ENCODE measurements at regions of chr14 and their contacts with region 1.

Region 1: DNA sequence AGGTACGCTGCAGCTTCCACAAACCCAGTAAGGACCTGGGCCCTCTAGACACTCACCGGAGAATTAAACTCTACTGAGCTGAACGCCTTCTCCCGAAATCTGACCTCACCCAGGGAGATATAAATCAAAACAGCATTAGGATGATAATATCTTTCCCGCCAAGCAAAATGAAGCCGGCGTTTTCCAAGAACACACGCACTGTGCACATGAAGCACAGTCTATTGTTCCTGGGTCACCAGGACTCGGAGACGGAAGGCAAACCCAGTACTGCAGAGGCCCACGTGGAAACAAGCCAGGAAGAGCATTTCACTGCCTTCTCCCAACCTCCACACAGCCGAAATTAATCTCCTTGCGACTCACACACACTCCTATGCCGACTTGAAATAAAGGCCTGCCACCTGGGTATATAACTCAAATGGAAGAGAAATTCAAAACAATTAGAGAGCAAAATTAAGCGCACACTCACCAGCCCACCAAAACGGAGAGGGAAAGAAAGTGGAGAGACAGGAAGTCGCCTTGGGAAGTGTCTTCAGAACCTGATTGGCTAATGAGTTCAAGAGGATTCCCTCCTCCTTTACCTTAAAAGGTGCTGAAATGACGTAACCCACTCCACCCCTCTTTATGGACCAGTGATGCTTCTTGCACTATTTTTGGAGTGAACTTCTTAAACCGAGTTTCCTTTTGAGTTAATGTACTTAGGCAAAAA is at the start of gene CCNB1IP1:
- DNase-seq: peak; percentile 29 to 83
- ATAC-seq: peak; percentile 96 to 100 (median 99)
- H3K4me3 ChIP-seq: peak within 1 kb of the TSS; percentile 29 to 75 (median 68)
- H3K27ac ChIP-seq: peak within 1 kb of the TSS; percentile 49 to 89 (median 84)
- H3K4me1 ChIP-seq: peaks cover 0 to 28% (median 23%) of the 10 kb centered on the region in 9 donors
- H3K27me3 ChIP-seq: no peaks in the 10 kb centered on the region
- CTCF ChIP-seq: no peak
- total RNA-seq, gene CCNB1IP1: 35.7 to 69.9 (median 56.0) TPM

Region 2: DNA sequence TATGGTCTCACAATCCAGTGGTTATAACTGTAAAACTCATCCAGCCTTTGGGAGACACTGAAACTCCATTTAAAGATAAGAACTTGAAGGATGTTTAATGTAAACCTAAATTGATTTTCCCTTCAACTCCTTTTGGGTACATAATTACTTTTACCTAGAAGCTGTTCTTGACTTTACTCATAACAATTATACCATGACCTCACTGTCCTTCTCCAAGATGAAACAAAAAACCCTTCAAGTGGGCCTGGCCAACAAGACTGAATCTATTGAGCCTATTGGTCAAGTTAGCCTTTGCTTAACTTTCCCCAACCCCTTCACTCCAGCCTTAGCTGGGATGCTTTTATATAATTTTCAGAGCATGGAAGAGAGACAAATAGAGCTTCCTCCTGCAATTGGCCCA is 33.0 kb after region 1 on chr14:
- intact Hi-C with region 1: no loop called
- DNase-seq: no peak
- ATAC-seq: no peak
- H3K4me3 ChIP-seq: no peak overlapping the region
- H3K27ac ChIP-seq: no peak overlapping the region
- H3K4me1 ChIP-seq: no peaks in the 10 kb centered on the region
- H3K27me3 ChIP-seq: no peaks in the 10 kb centered on the region
- CTCF ChIP-seq: no peak

Region 3: GRCh38 chr14:20461274-20462001 is 128.5 kb after region 1 on chr14 and contains the start of gene PIP4P1:
- intact Hi-C with region 1: loop called in 1 of 10 experiments (anchors 5 kb)
- DNase-seq: peak; percentile 97 to 99
- ATAC-seq: peak; percentile 96 to 99 (median 98)
- H3K4me3 ChIP-seq: peak within 1 kb of the TSS; percentile 81 to 100 (median 94)
- H3K27ac ChIP-seq: peak within 1 kb of the TSS; percentile 77 to 96 (median 93)
- H3K4me1 ChIP-seq: peaks cover 9 to 49% (median 24%) of the 10 kb centered on the region in 9 donors
- H3K27me3 ChIP-seq: no peaks in the 10 kb centered on the region
- CTCF ChIP-seq: no peak
- total RNA-seq, gene PIP4P1: 15.5 to 25.3 (median 18.7) TPM

Region 4: GRCh38 chr14:20606190-20606901 is 273.4 kb after region 1 on chr14:
- intact Hi-C with region 1: loop called in 6 of 10 experiments (anchors 2 to 10 kb)
- DNase-seq: peak in 1 of 2 donors; percentile 27
- ATAC-seq: peak in 2 of 8 donors; percentile 28 to 37
- H3K4me3 ChIP-seq: no peak overlapping the region
- H3K27ac ChIP-seq: no peak overlapping the region
- H3K4me1 ChIP-seq: peaks cover 0 to 19% (median 9%) of the 10 kb centered on the region in 9 donors
- H3K27me3 ChIP-seq: no peaks in the 10 kb centered on the region
- CTCF ChIP-seq: peak; percentile 21 to 65 (median 54)

Region 5: GRCh38 chr14:20799892-20800544 is 467.1 kb after region 1 on chr14:
- intact Hi-C with region 1: loop called in 1 of 10 experiments (anchors 10 kb)
- DNase-seq: peak; percentile 44 to 59
- ATAC-seq: peak; percentile 62 to 77 (median 76)
- H3K4me3 ChIP-seq: peak overlapping the region; percentile 43 to 66 (median 60)
- H3K27ac ChIP-seq: peak overlapping the region; percentile 56 to 91 (median 83)
- H3K4me1 ChIP-seq: peaks cover 3 to 68% (median 28%) of the 10 kb centered on the region in 9 donors
- H3K27me3 ChIP-seq: no peaks in the 10 kb centered on the region
- CTCF ChIP-seq: no peak

Measured in heart right ventricle (tissue), 16 donors.